ENCODE measurements at regions of chr2 and their contacts with region 1.

Region 1: DNA sequence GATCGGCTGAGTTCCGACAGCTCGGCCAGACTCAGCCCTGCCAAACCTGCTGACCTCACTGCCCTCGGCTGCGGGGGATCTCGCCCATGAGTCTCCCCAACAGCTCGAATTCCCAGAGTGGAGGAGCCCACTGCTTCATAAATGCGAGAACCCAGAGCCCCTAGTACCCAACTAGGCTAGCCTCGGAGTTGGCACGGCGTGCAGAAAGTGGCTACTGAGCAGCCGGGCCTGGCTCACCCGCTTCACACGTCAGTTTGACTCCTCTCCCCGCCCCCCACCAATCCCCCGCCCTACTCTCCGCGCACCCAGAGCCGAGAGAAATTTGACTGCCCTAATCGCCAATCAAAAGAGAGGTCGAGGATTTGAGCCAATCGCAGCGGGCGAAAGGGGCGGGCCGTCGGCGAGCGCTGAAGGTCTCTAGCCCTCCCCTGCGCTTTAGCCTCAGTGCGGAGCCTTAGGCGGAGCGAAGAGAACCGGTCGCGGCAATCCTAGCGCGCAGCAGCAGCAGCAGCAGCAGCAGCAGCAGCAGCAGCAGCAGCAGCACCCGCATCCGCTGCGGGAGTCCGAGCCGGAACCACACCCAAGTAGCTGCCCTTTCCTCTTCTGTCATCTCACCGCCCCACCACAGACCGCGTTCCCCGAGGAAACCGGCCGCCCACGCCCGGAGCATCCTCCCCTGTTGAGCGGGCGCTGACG is at the start of gene GLS:
- DNase-seq: peak; percentile 89 to 97 (median 95)
- ATAC-seq: peak; percentile 87
- H3K4me3 ChIP-seq: peak within 1 kb of the TSS; percentile 92
- H3K4me3 Mint-ChIP-seq: peak within 1 kb of the TSS; percentile 90 to 100 (median 96)
- H3K27ac ChIP-seq: peak within 1 kb of the TSS; percentile 93
- H3K27ac Mint-ChIP-seq: peak within 1 kb of the TSS; percentile 95 to 98 (median 97)
- H3K4me1 ChIP-seq: peaks cover 17 to 23% of the 10 kb centered on the region in 2 donors
- H3K4me1 Mint-ChIP-seq: peaks cover 25 to 72% (median 62%) of the 10 kb centered on the region in 7 donors
- H3K27me3 ChIP-seq: no peaks in the 10 kb centered on the region
- H3K27me3 Mint-ChIP-seq: no peaks in the 10 kb centered on the region
- total RNA-seq, gene GLS: 167 to 234 (median 202) TPM

Region 2: GRCh38 chr2:189674374-189675112 is 1206.0 kb before region 1 on chr2 and contains the start of gene ANKAR:
- CTCF ChIA-PET with region 1: no interaction called
- POLR2A ChIA-PET with region 1: no interaction called
- intact Hi-C with region 1: loop called in 1 of 2 experiments (anchors 10 kb)
- DNase-seq: peak; percentile 71 to 88 (median 84)
- ATAC-seq: peak; percentile 98
- H3K4me3 ChIP-seq: peak within 1 kb of the TSS; percentile 62
- H3K4me3 Mint-ChIP-seq: peak within 1 kb of the TSS; percentile 88 to 96 (median 95)
- H3K27ac ChIP-seq: peak within 1 kb of the TSS; percentile 86
- H3K27ac Mint-ChIP-seq: peak within 1 kb of the TSS; percentile 96 to 99 (median 97)
- H3K4me1 ChIP-seq: peaks cover 9 to 12% of the 10 kb centered on the region in 2 donors
- H3K4me1 Mint-ChIP-seq: peaks cover 17 to 49% (median 40%) of the 10 kb centered on the region in 7 donors
- H3K27me3 ChIP-seq: no peaks in the 10 kb centered on the region
- H3K27me3 Mint-ChIP-seq: no peaks in the 10 kb centered on the region
- total RNA-seq, gene ANKAR: 4.3 to 17.9 (median 10.3) TPM

Region 3: DNA sequence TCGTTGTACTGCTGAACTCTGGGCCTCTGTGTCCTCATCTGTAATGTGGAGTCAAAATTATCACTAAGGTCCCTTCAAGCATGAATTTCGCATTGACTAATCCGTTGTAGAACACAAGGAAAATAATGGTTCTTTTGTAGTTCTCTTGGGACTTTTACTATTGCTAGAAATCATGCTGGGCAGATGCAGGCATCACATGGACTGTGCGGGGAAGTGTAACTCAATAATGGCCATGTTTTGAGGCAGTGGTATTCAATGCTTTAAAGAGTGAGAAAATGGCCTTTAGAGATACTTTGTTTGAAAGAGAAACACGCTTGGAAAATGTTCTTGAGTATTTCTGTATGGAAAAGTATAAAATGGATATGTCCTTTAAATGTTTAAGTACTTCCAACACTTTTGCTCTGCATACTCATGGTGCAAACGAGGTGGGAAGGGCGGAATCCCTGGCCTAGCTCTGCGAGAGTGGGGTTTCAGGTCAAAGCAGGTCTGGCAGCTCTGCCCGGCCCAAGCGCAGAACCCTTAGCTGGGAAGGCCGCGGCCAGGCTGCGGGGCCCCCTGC is 700.7 kb before region 1 on chr2:
- CTCF ChIA-PET with region 1: no interaction called
- POLR2A ChIA-PET with region 1: no interaction called
- intact Hi-C with region 1: no loop called
- DNase-seq: no peak
- ATAC-seq: no peak
- H3K4me3 ChIP-seq: peak overlapping the region; percentile 47
- H3K4me3 Mint-ChIP-seq: peak overlapping the region; percentile 44 to 86 (median 70)
- H3K27ac ChIP-seq: no peak overlapping the region
- H3K27ac Mint-ChIP-seq: no peak overlapping the region
- H3K4me1 ChIP-seq: no peaks in the 10 kb centered on the region
- H3K4me1 Mint-ChIP-seq: peaks cover 4 to 14% (median 10%) of the 10 kb centered on the region in 7 donors
- H3K27me3 ChIP-seq: peaks cover 0 to 12% of the 10 kb centered on the region in 2 donors
- H3K27me3 Mint-ChIP-seq: peaks cover 31 to 44% (median 41%) of the 10 kb centered on the region in 5 donors

Region 4: GRCh38 chr2:190408538-190409271 is 471.8 kb before region 1 on chr2:
- CTCF ChIA-PET with region 1: no interaction called
- POLR2A ChIA-PET with region 1: interaction called, 12 read pairs
- intact Hi-C with region 1: loop called (anchors 1 to 2 kb)
- DNase-seq: peak in 8 of 9 donors; percentile 69 to 86 (median 82)
- ATAC-seq: peak; percentile 68
- H3K4me3 ChIP-seq: peak overlapping the region; percentile 76
- H3K4me3 Mint-ChIP-seq: peak overlapping the region; percentile 87 to 95 (median 92)
- H3K27ac ChIP-seq: peak overlapping the region; percentile 100
- H3K27ac Mint-ChIP-seq: peak overlapping the region; percentile 94 to 98 (median 98)
- H3K4me1 ChIP-seq: peaks cover 28 to 41% of the 10 kb centered on the region in 2 donors
- H3K4me1 Mint-ChIP-seq: peaks cover 29 to 52% (median 45%) of the 10 kb centered on the region in 7 donors
- H3K27me3 ChIP-seq: no peaks in the 10 kb centered on the region
- H3K27me3 Mint-ChIP-seq: no peaks in the 10 kb centered on the region

Region 5: GRCh38 chr2:190781604-190782198 is 98.8 kb before region 1 on chr2:
- CTCF ChIA-PET with region 1: no interaction called
- POLR2A ChIA-PET with region 1: no interaction called
- intact Hi-C with region 1: loop called in 1 of 2 experiments (anchors 5 kb)
- DNase-seq: peak in 8 of 9 donors; percentile 27 to 60 (median 46)
- ATAC-seq: peak; percentile 77
- H3K4me3 ChIP-seq: no peak overlapping the region
- H3K4me3 Mint-ChIP-seq: no peak overlapping the region
- H3K27ac ChIP-seq: no peak overlapping the region
- H3K27ac Mint-ChIP-seq: no peak overlapping the region
- H3K4me1 ChIP-seq: no peaks in the 10 kb centered on the region
- H3K4me1 Mint-ChIP-seq: peaks cover 0 to 11% (median 1%) of the 10 kb centered on the region in 7 donors
- H3K27me3 ChIP-seq: no peaks in the 10 kb centered on the region
- H3K27me3 Mint-ChIP-seq: peaks cover 0 to 8% (median 0%) of the 10 kb centered on the region in 5 donors

Region 6: DNA sequence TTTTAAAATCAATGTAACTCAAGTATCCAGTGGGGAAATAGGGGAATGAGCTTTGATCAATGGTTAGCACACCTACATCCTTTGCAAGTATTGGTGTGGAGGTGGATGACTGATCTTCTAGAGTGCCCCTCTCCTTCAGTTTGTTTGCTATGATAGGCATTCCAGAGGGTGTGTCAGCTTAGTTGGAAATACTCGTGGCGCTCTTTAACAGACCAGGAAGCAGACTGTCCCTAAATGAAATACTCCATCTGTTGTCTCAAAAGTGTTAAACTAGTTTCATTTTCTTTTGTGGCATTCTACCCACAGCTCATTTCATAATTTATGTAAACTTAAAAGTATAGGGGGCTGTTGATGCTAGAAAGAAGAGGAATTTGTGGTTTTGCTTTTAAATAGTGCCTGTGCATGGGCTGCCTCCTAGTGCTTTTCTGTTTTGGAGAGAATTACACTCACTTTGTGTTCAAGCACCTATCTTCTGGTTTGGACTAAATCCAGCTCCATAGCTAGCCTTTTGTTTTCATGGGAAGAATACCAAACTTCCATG is 67.3 kb after region 1 on chr2:
- CTCF ChIA-PET with region 1: interaction called, 3 read pairs
- POLR2A ChIA-PET with region 1: interaction called, 34 read pairs
- intact Hi-C with region 1: loop called (anchors 1 to 2 kb)
- DNase-seq: peak in 7 of 9 donors; percentile 53 to 80 (median 72)
- ATAC-seq: peak; percentile 92
- H3K4me3 ChIP-seq: no peak overlapping the region
- H3K4me3 Mint-ChIP-seq: peak overlapping the region in 7 of 10 donors; percentile 26 to 78 (median 57)
- H3K27ac ChIP-seq: peak overlapping the region; percentile 74
- H3K27ac Mint-ChIP-seq: peak overlapping the region in 4 of 9 donors; percentile 68 to 98 (median 96)
- H3K4me1 ChIP-seq: peaks cover 12 to 27% of the 10 kb centered on the region in 2 donors
- H3K4me1 Mint-ChIP-seq: peaks cover 7 to 19% (median 15%) of the 10 kb centered on the region in 7 donors
- H3K27me3 ChIP-seq: no peaks in the 10 kb centered on the region
- H3K27me3 Mint-ChIP-seq: no peaks in the 10 kb centered on the region

Region 7: GRCh38 chr2:191617575-191617974 is 737.0 kb after region 1 on chr2:
- CTCF ChIA-PET with region 1: no interaction called
- POLR2A ChIA-PET with region 1: interaction called, 8 read pairs
- intact Hi-C with region 1: loop called in 1 of 2 experiments (anchors 5 kb)
- DNase-seq: peak in 8 of 9 donors; percentile 47 to 89 (median 84)
- ATAC-seq: peak; percentile 92
- H3K4me3 ChIP-seq: peak overlapping the region; percentile 11
- H3K4me3 Mint-ChIP-seq: peak overlapping the region; percentile 0 to 71 (median 40)
- H3K27ac ChIP-seq: peak overlapping the region; percentile 84
- H3K27ac Mint-ChIP-seq: peak overlapping the region; percentile 80 to 98 (median 89)
- H3K4me1 ChIP-seq: peaks cover 21 to 22% of the 10 kb centered on the region in 2 donors
- H3K4me1 Mint-ChIP-seq: peaks cover 31 to 59% (median 51%) of the 10 kb centered on the region in 7 donors
- H3K27me3 ChIP-seq: no peaks in the 10 kb centered on the region
- H3K27me3 Mint-ChIP-seq: no peaks in the 10 kb centered on the region